ENCODE measurements at regions of chr16 and their contacts with region 1.

Region 1: GRCh38 chr16:23739516-23739915 is 15.3 kb upstream of the CHP2 start:
- DNase-seq: no peak
- H3K4me3 ChIP-seq: no peak overlapping the region
- H3K27ac ChIP-seq: no peak overlapping the region
- H3K4me1 ChIP-seq: no peaks in the 10 kb centered on the region
- H3K27me3 ChIP-seq: peaks cover 0 to 16% (median 0%) of the 10 kb centered on the region in 3 donors
- CTCF ChIP-seq: no peak
- EP300 ChIP-seq: no peak
- POLR2A ChIP-seq: no peak

Region 2: DNA sequence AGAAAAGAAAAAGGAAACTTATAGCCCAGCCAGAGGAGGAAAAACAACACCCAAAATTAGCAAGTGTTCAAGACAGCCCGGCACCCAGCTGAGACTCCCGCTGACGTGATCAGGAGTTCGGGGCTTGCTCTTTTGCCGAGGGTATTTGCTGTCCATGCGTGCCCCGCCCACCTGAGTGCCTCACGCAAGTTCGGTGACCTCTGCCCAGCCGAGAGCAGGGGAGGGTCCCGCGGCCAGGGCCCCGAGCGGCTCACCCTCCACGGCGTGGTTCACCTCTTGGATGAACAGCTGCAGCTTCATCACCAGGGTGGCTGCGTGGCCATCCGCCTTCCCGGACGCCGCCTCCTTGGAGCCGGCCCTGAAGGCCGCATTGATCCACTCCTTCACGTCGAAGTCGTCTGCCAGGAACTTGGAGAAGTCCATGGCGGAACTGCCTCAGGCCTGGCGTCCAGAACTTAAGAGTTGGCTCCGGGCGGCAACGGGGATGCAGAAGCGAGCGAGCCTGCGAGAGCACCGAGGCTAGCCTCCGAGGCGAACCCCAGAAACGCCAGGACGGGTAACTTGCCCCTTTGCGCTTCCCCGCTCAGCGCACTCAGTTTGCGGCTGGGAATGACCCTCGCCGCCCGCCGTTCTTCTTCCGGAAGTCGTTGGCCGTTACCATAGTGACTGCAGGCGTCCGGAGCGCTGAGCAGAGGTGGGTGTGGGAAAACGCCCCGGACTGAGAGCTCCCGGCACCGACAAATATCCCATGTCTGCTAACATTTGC is 286.8 kb before region 1 on chr16 and contains the start of gene COG7:
- intact Hi-C with region 1: no loop called
- DNase-seq: peak; percentile 93
- H3K4me3 ChIP-seq: peak within 1 kb of the TSS; percentile 60 to 87 (median 78)
- H3K27ac ChIP-seq: peak within 1 kb of the TSS; percentile 83 to 88 (median 86)
- H3K4me1 ChIP-seq: peaks cover 0 to 40% (median 24%) of the 10 kb centered on the region in 4 donors
- H3K27me3 ChIP-seq: no peaks in the 10 kb centered on the region
- CTCF ChIP-seq: no peak
- EP300 ChIP-seq: peak in 1 of 4 donors; percentile 24
- POLR2A ChIP-seq: no peak
- total RNA-seq, gene COG7: 12.0 to 25.5 (median 13.9) TPM

Region 3: GRCh38 chr16:23694644-23695373 is 44.7 kb before region 1 on chr16:
- intact Hi-C with region 1: no loop called
- DNase-seq: no peak
- H3K4me3 ChIP-seq: peak overlapping the region in 1 of 4 donors; percentile 19
- H3K27ac ChIP-seq: no peak overlapping the region
- H3K4me1 ChIP-seq: peaks cover 0 to 9% (median 4%) of the 10 kb centered on the region in 4 donors
- H3K27me3 ChIP-seq: no peaks in the 10 kb centered on the region
- CTCF ChIP-seq: no peak
- EP300 ChIP-seq: no peak
- POLR2A ChIP-seq: no peak

Region 4: DNA sequence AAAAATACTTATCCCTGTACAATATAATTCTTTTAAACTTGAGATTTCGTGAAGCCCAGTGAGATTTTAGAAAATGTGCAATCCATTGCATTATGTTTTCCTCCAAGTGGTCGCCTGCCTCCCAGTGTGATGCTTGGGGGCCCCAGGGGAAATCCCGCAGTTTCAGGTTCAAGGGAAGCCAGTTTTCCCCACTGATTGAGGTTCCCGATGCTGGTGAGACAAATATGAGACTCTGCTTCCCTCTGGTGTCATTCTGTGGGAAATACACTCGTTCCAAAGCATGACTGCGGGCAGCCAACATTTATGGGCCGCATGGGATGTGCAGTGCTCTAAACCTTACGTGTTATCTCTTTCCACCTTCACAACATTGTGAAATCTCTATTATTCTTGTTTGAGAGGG is 297.1 kb after region 1 on chr16:
- intact Hi-C with region 1: loop called (anchors 5 kb)
- DNase-seq: no peak
- H3K4me3 ChIP-seq: no peak overlapping the region
- H3K27ac ChIP-seq: no peak overlapping the region
- H3K4me1 ChIP-seq: no peaks in the 10 kb centered on the region
- H3K27me3 ChIP-seq: no peaks in the 10 kb centered on the region
- CTCF ChIP-seq: peak; percentile 50 to 78 (median 56)
- EP300 ChIP-seq: no peak
- POLR2A ChIP-seq: no peak